ENCODE measurements at regions of chr9 and their contacts with region 1.

Region 1: DNA sequence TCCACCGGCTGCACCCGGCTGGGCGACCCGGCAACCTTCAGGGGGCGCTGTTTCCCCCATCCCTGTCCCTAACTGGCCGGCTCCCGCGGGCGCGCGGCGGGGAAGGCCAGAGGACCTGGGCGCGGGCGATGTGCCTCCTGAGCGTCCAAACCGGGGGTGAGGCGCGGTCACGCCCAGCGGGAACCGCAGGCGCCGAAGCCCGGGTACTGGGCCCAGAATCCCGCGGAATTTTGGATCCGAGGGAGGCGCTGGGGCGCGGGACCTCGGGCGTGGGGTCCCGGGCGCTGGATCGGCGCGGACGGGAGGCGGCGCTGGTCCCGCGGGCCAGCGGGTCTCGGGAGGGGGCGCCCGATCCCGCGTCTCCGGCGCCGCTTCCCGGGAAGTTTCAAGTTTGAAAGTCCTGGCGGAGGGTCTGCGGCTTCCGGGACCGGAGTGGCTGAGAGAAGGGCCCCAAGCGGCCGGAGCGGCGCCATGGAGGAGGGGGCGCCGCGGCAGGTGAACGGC is at the start of gene PKN3:
- DNase-seq: peak; percentile 87 to 94 (median 90)
- ATAC-seq: peak; percentile 43 to 85 (median 74)
- H3K4me3 ChIP-seq: peak within 1 kb of the TSS; percentile 61 to 97 (median 78)
- H3K27ac ChIP-seq: peak within 1 kb of the TSS; percentile 80 to 96 (median 91)
- H3K4me1 ChIP-seq: peaks cover 0 to 28% (median 6%) of the 10 kb centered on the region in 12 donors
- H3K27me3 ChIP-seq: no peaks in the 10 kb centered on the region
- CTCF ChIP-seq: peak; percentile 82 to 96 (median 90)
- POLR2A ChIP-seq: peak in 1 of 2 donors; percentile 52
- total RNA-seq, gene PKN3: 3.7 to 16.1 (median 5.9) TPM

Region 2: DNA sequence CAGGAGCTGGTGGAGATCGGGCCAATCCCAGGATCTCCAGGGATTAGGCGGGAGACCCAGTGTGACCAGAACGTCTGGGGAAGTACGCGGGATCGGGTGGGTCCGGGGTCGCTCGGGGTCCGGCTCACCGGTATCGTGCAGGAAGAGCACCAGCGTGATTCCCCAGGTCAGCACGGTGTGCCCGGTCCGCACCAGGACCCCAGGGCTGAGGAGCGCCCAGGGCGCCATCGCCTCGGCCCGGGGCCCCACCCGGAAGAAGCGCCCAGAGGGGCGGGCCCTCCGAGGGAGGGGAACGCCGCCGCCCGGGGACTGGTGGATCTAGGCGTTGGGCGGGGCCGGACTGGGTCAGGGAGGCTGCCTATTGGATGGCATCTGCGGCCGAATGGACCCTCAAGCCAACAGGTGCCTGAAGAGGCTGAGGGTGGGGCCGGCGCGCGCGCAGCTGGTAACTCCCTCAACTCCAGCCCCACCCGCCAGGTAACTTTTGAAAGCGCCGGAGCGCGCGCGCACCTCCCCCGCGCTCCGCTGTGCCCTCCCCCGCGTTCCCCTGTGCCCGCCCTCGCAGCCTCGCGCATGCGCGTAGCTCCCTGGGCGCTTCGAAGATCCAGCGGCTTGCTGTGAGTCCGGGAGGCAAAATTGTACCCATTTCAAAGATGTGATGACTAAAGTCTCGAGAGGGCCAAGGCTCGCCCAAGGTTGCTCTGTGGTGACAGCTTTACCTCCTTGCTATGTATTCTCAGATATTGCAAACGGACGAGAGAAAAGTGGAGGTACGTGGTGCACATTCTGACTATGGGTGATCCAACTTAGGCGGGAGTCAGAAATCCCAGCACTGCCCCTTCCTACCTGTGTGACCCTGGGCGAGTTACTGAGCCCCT is 21.6 kb after region 1 on chr9 and contains the start of gene ZDHHC12:
- intact Hi-C with region 1: loop called in 2 of 10 experiments (anchors 2 kb)
- DNase-seq: peak; percentile 93 to 98 (median 97)
- ATAC-seq: peak; percentile 87 to 93 (median 92)
- H3K4me3 ChIP-seq: peak within 1 kb of the TSS; percentile 18 to 86 (median 71)
- H3K27ac ChIP-seq: peak within 1 kb of the TSS; percentile 18 to 86 (median 79)
- H3K4me1 ChIP-seq: peaks cover 0 to 21% (median 6%) of the 10 kb centered on the region in 12 donors
- H3K27me3 ChIP-seq: no peaks in the 10 kb centered on the region
- CTCF ChIP-seq: no peak
- POLR2A ChIP-seq: peak in 1 of 2 donors; percentile 81
- total RNA-seq, gene ZDHHC12: 5.1 to 26.0 (median 10.5) TPM

Region 3: DNA sequence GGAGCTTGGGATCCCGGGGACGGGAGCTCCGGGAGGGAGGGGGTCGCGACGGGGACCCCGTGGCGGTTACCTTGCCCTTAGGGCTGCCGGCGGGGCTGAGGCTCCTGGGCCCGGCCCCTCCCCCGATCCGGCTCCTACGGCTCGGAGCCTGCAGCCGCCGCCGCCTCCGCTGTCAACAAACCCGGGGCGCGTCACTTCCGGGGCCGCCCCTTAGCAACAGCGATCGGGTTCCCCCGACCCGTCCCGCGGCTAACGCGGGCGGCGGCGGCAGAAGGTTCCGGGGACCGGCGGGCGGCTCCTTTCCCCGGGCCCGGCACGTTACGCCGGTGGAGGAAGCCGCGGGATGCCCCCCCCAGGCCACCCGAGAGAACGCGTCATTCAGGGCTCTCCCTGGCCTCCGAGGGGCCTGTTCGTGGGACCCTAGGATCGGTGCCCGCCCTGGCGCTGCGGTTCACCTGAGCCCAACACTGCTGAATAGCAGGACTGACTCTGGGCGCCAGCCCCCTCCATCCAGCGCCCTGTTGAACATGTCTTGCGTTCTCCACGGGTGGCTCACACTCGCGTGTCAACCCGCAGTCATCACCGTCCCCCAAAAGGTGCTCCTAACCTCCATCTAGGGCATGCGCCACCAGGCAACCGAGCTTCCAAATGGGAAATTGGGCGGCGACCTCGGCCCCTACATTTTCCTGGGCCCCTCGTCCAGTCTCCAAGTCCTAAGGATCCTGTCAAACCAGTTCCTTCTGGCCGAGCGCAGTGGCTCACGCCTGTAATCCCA is 69.4 kb after region 1 on chr9 and contains the start of gene ZER1:
- intact Hi-C with region 1: loop called in 1 of 10 experiments (anchors 5 kb)
- DNase-seq: peak; percentile 94 to 97 (median 95)
- ATAC-seq: peak; percentile 93 to 98 (median 98)
- H3K4me3 ChIP-seq: peak within 1 kb of the TSS; percentile 70 to 100 (median 86)
- H3K27ac ChIP-seq: peak within 1 kb of the TSS; percentile 81 to 98 (median 92)
- H3K4me1 ChIP-seq: peaks cover 0 to 33% (median 21%) of the 10 kb centered on the region in 12 donors
- H3K27me3 ChIP-seq: no peaks in the 10 kb centered on the region
- CTCF ChIP-seq: peak in 1 of 12 donors; percentile 3
- POLR2A ChIP-seq: peak in 1 of 2 donors; percentile 80
- total RNA-seq, gene ZER1: 53.4 to 163 (median 62.3) TPM

Region 4: DNA sequence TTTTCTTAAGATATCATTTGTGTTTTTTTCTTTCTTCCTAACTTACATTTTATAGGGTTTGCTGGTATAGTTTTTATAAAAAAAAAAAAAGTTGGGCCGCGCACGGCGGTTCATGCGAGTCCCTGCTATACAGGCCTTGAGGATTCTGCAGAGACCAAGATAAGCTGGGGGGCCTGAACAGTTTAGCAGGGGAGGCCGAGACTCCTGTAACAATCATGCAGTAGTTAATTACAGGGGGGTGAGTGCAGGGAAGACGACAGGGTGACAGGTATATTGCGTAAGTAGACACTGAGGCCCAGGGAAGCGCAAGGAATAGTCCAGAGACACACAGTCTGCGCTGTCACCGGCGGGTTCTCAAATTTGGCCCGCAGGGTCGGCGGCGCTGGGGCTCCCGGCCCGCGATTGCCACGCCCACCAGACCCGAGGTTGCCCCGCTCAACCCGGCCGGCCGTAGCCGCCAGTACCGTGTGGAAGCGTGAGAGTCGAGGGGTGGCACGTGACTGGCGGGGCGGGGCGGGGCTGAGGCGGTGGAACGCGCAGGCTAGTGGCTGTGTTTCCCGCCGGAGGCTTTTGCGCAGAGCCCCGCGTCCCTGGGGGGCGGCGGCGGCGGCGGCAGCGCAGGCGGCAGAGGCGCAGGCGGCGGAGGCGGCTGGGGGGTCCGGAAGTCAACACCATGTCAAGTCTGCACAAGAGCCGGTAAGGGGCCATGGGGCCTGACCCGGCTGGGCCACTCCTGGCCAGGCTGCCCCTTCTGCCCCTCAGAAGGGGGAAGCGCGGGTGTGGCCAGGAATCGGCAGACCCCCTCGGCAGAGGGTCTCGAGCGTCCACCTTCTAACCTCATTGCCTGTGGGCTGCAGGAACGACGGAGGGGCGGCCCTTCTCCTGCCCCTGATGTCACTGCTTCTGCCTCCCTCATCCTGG is 84.4 kb after region 1 on chr9 and contains the start of gene TBC1D13:
- intact Hi-C with region 1: loop called in 2 of 10 experiments (anchors 1 to 5 kb)
- DNase-seq: peak; percentile 91 to 93 (median 92)
- ATAC-seq: peak; percentile 87 to 98 (median 98)
- H3K4me3 ChIP-seq: peak within 1 kb of the TSS; percentile 77 to 100 (median 95)
- H3K27ac ChIP-seq: peak within 1 kb of the TSS; percentile 70 to 92 (median 87)
- H3K4me1 ChIP-seq: peaks cover 0 to 26% (median 15%) of the 10 kb centered on the region in 12 donors
- H3K27me3 ChIP-seq: no peaks in the 10 kb centered on the region
- CTCF ChIP-seq: no peak
- POLR2A ChIP-seq: peak in 1 of 2 donors; percentile 73
- total RNA-seq, gene TBC1D13: 12.1 to 27.3 (median 18.4) TPM

Region 5: GRCh38 chr9:129071526-129072131 is 369.1 kb after region 1 on chr9:
- intact Hi-C with region 1: no loop called
- DNase-seq: no peak
- ATAC-seq: no peak
- H3K4me3 ChIP-seq: no peak overlapping the region
- H3K27ac ChIP-seq: no peak overlapping the region
- H3K4me1 ChIP-seq: peaks cover 0 to 28% (median 11%) of the 10 kb centered on the region in 12 donors
- H3K27me3 ChIP-seq: no peaks in the 10 kb centered on the region
- CTCF ChIP-seq: no peak
- POLR2A ChIP-seq: no peak